ENCODE measurements at regions of chr5 and their contacts with region 1.

Region 1: DNA sequence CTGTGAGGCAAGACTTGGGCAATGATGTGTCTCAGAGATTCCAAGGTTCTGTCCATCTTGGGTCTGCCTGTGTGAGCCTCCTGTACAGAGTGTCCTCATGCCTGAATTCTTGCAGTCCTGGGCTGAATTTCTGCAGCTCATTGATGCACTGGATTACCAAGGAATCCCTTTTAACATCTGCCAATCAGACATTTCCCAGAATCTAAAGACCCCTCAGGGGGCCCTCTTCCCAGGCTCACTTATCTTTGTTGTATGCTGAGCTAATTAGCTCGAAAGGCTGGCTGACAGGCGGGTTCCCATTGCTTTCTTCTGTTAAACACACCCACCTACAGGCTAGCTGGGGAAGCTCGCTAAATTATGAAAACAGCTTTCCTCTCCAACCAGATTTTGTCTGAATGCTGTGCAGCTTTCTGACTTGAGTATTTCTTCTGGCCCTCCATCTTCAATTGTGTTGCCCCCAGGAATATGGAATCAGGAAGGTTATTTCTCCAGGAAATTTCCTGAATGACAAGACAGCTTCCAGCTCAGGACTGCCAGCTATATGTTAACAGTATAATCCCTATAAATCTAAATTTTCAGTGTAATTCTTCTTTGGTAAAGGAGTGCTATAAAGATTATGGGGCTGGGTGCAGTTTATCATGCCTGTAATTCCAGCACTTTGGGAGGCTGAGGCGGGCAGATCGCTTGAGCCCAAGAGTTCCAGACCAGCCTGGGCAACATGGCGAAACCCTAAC is at the start of gene LIX1:
- DNase-seq: peak; percentile 68

Region 2: DNA sequence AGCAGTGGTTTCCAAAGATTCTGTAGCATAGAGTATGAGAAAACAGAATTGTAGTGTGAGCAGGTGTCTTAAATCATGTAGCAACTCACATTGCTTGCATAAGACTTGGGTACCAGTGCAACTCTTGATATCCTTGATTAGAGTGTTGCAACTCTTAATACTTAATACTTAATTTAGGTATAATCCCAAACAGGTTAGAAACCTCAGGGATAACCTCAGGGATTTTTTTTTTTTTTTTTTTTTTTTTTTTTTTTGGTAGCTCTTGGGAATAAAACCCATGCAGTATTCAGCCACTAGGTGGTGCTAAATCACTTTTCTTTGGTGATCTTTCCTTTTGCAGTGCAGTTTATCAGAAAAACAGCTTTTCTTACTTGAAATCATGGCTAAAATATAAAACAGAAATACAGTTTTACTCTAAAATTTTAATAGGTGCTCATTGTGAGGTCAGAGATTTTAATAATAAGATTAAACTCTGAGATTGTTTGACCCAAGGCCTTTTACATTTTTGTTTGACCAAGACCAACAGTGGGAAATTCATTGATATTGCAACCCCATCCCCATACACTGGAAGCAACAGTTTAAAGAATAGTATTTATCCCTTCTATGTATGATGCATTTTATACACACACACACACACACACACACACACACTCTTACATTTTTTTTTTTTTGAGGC is 390.2 kb before region 1 on chr5:
- CTCF ChIA-PET with region 1: interaction called, 10 read pairs
- POLR2A ChIA-PET with region 1: no interaction called
- DNase-seq: peak; percentile 40

Region 3: DNA sequence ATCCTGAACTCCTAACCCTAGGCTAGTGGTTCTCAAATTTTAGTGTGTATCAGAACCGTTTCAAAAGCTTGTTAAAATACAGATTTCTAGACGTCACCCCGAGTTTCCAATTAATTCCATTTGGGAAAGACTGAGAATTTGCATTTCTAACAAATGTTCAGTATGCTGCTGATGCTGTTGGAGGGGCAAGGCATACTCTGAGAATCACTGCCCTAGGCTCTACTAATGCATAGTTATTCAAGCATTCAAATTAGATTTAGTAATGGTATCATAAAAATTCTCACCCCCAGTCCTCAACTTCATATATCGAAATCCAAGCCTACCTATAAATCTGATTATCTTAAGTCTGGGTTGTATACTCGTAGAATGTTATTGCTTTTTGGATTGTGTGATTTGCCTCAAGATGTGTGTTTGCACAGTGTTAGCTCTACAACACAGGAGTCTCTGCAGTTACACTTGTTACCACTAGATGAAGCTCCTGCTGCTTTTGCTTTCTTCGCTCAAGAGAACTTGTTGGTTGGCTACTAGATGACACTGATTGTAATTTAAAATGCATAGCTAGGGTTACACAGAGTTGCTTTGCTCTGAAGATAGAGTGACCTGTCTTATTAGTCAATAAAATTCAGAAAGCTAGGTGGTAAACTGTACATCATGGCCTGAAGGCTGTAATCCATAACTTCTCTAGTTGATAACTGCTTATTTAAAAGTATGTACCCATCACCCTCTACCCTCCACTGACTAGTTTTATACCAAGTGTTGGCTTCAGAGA is 273.9 kb before region 1 on chr5:
- CTCF ChIA-PET with region 1: interaction called, 21 read pairs
- POLR2A ChIA-PET with region 1: no interaction called
- DNase-seq: peak; percentile 70

Region 4: GRCh38 chr5:96997265-96997859 is 145.3 kb before region 1 on chr5:
- CTCF ChIA-PET with region 1: interaction called, 16 read pairs
- POLR2A ChIA-PET with region 1: no interaction called
- DNase-seq: peak; percentile 17

Region 5: GRCh38 chr5:97208714-97209113 is 66.0 kb after region 1 on chr5:
- CTCF ChIA-PET with region 1: no interaction called
- POLR2A ChIA-PET with region 1: no interaction called
- DNase-seq: no peak

Measured in HEK293T (cell line).